Activated CD4-positive, alpha-beta T cell treated with anti-CD3 and anti-CD28 coated beads for 36 hours (primary cell): ENCODE measurements at regions of chrX and their contacts with region 1.

Region 1: DNA sequence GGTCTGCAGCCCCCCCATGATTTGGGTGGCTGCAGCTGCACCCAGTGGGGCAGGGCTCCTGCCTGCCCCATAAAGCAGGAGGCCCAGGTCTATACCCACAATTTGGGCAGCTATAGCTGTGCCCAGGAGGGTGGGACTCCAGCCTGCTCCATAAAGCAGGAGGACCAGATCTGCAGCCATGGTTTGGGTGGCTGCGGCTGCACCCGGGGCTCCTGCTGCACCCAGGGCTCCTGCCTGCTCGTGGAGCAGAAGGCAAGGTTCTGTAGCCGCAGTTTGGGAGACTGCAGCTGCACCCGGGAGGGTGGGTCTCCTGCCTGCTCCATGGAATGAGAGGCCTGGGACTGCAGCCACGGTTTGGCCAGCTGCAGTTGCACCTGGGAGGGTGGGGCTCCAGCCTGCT is 81.1 kb downstream of the ATRX start:
- DNase-seq: no peak
- ATAC-seq: no peak
- H3K4me3 Mint-ChIP-seq: no peak overlapping the region
- H3K27ac Mint-ChIP-seq: no peak overlapping the region
- H3K4me1 Mint-ChIP-seq: peaks cover 8% of the 10 kb centered on the region
- H3K27me3 Mint-ChIP-seq: no peaks in the 10 kb centered on the region

Region 2: DNA sequence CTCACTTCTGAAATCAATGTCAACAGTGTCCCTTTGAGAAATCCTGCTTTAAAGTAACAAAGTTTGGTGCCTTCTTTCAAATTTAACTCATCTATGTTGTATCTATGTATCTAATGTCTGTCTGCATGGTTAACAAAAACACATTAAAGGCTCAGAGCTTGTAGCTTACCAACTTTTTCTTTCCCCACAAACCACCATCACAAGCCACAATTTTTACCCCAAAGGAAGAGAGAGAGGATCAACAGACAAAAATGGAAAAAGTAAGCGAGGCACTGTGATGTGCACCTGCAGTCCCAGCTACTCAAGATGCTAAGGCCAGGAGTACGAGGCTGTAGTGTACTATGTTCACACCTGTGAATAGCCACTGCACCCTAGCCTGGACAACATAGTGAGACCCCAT is 63.9 kb after region 1 on chrX:
- CTCF ChIA-PET with region 1: no interaction called
- POLR2A ChIA-PET with region 1: no interaction called
- intact Hi-C with region 1: no loop called
- DNase-seq: no peak
- ATAC-seq: no peak
- H3K4me3 Mint-ChIP-seq: no peak overlapping the region
- H3K27ac Mint-ChIP-seq: peak overlapping the region; percentile 20
- H3K4me1 Mint-ChIP-seq: peaks cover 24% of the 10 kb centered on the region
- H3K27me3 Mint-ChIP-seq: no peaks in the 10 kb centered on the region

Region 3: GRCh38 chrX:77875372-77875771 is 170.5 kb after region 1 on chrX:
- CTCF ChIA-PET with region 1: no interaction called
- POLR2A ChIA-PET with region 1: no interaction called
- intact Hi-C with region 1: loop called in 1 of 2 experiments (anchors 5 kb)
- DNase-seq: no peak
- ATAC-seq: no peak
- H3K4me3 Mint-ChIP-seq: no peak overlapping the region
- H3K27ac Mint-ChIP-seq: no peak overlapping the region
- H3K4me1 Mint-ChIP-seq: peaks cover 4% of the 10 kb centered on the region
- H3K27me3 Mint-ChIP-seq: no peaks in the 10 kb centered on the region